B cell (primary cell): ENCODE measurements at regions of chr3 and their contacts with region 1.

Region 1: GRCh38 chr3:187319699-187320302 is 28.3 kb upstream of the MASP1 start:
- DNase-seq: peak; percentile 61
- ATAC-seq: peak; percentile 64
- H3K4me3 ChIP-seq: no peak overlapping the region
- H3K4me3 Mint-ChIP-seq: no peak overlapping the region
- H3K27ac ChIP-seq: no peak overlapping the region
- H3K27ac Mint-ChIP-seq: no peak overlapping the region
- H3K4me1 ChIP-seq: peaks cover 6% of the 10 kb centered on the region in 2 donors
- H3K4me1 Mint-ChIP-seq: peaks cover 8% of the 10 kb centered on the region
- H3K27me3 ChIP-seq: peaks cover 0 to 40% (median 21%) of the 10 kb centered on the region in 4 experiments
- H3K27me3 Mint-ChIP-seq: peaks cover 58% of the 10 kb centered on the region
- CTCF ChIP-seq: peak; percentile 73

Region 2: GRCh38 chr3:186772701-186773424 is 546.9 kb before region 1 on chr3:
- CTCF ChIA-PET with region 1: no interaction called
- POLR2A ChIA-PET with region 1: no interaction called
- intact Hi-C with region 1: no loop called
- DNase-seq: peak; percentile 87
- ATAC-seq: peak; percentile 93
- H3K4me3 ChIP-seq: peak overlapping the region; percentile 50 to 98 (median 79)
- H3K4me3 Mint-ChIP-seq: peak overlapping the region; percentile 93
- H3K27ac ChIP-seq: peak overlapping the region; percentile 69 to 87
- H3K27ac Mint-ChIP-seq: peak overlapping the region; percentile 91
- H3K4me1 ChIP-seq: peaks cover 11 to 12% of the 10 kb centered on the region in 2 donors
- H3K4me1 Mint-ChIP-seq: peaks cover 17% of the 10 kb centered on the region
- H3K27me3 ChIP-seq: no peaks in the 10 kb centered on the region
- H3K27me3 Mint-ChIP-seq: no peaks in the 10 kb centered on the region
- CTCF ChIP-seq: no peak

Region 3: GRCh38 chr3:187305881-187306280 is 13.9 kb before region 1 on chr3:
- CTCF ChIA-PET with region 1: interaction called, 40 read pairs
- POLR2A ChIA-PET with region 1: no interaction called
- intact Hi-C with region 1: no loop called
- DNase-seq: no peak
- ATAC-seq: no peak
- H3K4me3 ChIP-seq: no peak overlapping the region
- H3K4me3 Mint-ChIP-seq: no peak overlapping the region
- H3K27ac ChIP-seq: no peak overlapping the region
- H3K27ac Mint-ChIP-seq: no peak overlapping the region
- H3K4me1 ChIP-seq: no peaks in the 10 kb centered on the region
- H3K4me1 Mint-ChIP-seq: no peaks in the 10 kb centered on the region
- H3K27me3 ChIP-seq: peaks cover 0 to 7% (median 1%) of the 10 kb centered on the region in 4 experiments
- H3K27me3 Mint-ChIP-seq: peaks cover 35% of the 10 kb centered on the region
- CTCF ChIP-seq: no peak

Region 4: DNA sequence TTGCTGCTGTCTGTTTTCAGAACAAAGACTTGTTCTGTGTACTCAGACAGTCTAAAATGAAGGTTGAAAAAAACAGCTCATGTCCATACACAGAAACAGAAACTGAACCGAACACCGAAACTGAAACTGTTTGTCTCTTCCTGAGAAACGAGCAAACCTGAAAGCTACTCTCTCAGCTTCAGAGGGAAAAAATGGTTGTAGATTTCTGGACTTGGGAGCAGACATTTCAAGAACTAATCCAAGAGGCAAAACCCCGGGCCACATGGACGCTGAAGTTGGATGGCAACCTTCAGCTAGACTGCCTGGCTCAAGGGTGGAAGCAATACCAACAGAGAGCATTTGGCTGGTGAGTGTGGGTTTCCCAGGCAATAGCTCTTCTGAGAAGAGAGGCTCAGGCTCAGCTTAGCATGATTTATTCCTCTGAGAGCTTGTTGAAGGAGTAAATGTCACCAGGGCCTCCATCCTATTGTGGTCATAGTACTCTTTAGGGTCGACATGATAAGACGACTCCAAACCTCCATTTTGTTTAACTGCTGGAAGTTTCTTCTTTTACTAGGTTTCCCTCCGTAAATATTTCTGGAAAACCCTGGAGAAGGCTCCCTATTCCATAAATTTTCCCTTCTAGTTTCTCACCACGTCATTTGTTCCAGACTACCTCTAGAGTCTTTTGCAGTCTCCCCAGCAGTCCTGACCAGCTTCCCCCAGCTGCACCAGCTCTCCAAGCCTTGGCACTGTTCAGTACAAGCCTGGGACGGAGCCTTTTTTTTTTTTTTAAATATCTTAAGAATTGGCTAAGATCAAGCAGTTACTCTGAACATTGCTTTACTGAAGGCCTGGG is 48.7 kb after region 1 on chr3 and contains the start of gene RTP4:
- CTCF ChIA-PET with region 1: interaction called, 10 read pairs
- POLR2A ChIA-PET with region 1: no interaction called
- intact Hi-C with region 1: no loop called
- DNase-seq: peak; percentile 78
- ATAC-seq: peak; percentile 82
- H3K4me3 ChIP-seq: peak within 1 kb of the TSS; percentile 74 to 92 (median 81)
- H3K4me3 Mint-ChIP-seq: peak within 1 kb of the TSS; percentile 98
- H3K27ac ChIP-seq: peak within 1 kb of the TSS; percentile 71 to 89
- H3K27ac Mint-ChIP-seq: peak within 1 kb of the TSS; percentile 95
- H3K4me1 ChIP-seq: peaks cover 16 to 17% of the 10 kb centered on the region in 2 donors
- H3K4me1 Mint-ChIP-seq: peaks cover 21% of the 10 kb centered on the region
- H3K27me3 ChIP-seq: no peaks in the 10 kb centered on the region
- H3K27me3 Mint-ChIP-seq: no peaks in the 10 kb centered on the region
- CTCF ChIP-seq: no peak
- total RNA-seq, gene RTP4: 6.7 and 8.2 TPM in 2 replicates

Region 5: GRCh38 chr3:187628169-187628568 is 308.4 kb after region 1 on chr3:
- CTCF ChIA-PET with region 1: no interaction called
- POLR2A ChIA-PET with region 1: no interaction called
- intact Hi-C with region 1: no loop called
- DNase-seq: no peak
- ATAC-seq: no peak
- H3K4me3 ChIP-seq: no peak overlapping the region
- H3K4me3 Mint-ChIP-seq: no peak overlapping the region
- H3K27ac ChIP-seq: no peak overlapping the region
- H3K27ac Mint-ChIP-seq: no peak overlapping the region
- H3K4me1 ChIP-seq: no peaks in the 10 kb centered on the region
- H3K4me1 Mint-ChIP-seq: no peaks in the 10 kb centered on the region
- H3K27me3 ChIP-seq: peaks cover 0 to 6% (median 0%) of the 10 kb centered on the region in 4 experiments
- H3K27me3 Mint-ChIP-seq: peaks cover 32% of the 10 kb centered on the region
- CTCF ChIP-seq: no peak

Region 6: DNA sequence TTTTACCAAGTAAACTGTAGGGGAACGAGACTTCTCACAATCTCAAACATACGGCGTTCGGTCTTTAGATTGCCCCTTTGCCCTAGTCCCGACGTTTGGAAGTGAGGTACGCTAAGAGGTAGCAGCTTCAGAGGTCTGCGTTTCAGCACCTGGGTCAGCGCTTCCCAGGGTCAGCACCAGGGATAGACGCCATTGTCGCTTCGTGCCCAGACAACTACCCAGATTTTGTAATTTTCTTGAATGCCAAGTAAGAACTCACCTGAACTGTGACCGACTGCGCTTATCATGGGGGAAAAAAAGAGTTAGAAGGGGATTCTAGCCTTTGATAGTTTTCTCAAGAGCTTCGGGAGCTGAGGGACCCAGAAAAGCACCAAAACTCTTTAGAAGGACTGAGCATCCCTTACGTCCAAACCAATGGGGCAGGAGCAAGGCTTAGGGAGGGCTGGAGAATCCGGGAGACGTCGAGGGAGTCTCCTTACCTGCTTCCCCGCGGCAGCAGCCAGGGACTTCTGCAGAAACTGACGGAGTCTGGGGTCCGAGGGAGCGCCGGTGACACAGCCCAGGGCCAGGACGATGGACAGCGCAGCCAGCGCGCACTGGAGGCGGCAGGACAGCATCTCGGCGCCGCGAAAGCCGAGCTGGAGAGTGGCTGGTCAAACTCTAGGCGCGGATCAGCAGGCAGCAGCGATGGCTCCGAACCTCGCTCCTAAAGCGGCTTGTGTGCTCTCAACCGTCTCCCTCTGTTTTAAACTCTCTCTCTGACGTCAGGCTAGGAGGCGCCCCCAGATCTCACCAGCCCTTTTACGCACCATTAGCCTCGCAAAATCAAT is 350.1 kb after region 1 on chr3 and contains the start of gene SST:
- CTCF ChIA-PET with region 1: interaction called, 15 read pairs
- POLR2A ChIA-PET with region 1: no interaction called
- intact Hi-C with region 1: no loop called
- DNase-seq: no peak
- ATAC-seq: no peak
- H3K4me3 ChIP-seq: no peak within 1 kb of the TSS
- H3K4me3 Mint-ChIP-seq: no peak within 1 kb of the TSS
- H3K27ac ChIP-seq: no peak within 1 kb of the TSS
- H3K27ac Mint-ChIP-seq: no peak within 1 kb of the TSS
- H3K4me1 ChIP-seq: peaks cover 0 to 4% of the 10 kb centered on the region in 2 donors
- H3K4me1 Mint-ChIP-seq: peaks cover 5% of the 10 kb centered on the region
- H3K27me3 ChIP-seq: peaks cover 0 to 30% (median 22%) of the 10 kb centered on the region in 4 experiments
- H3K27me3 Mint-ChIP-seq: peaks cover 59% of the 10 kb centered on the region
- CTCF ChIP-seq: no peak
- total RNA-seq, gene SST: not detected in 2 replicates

Region 7: DNA sequence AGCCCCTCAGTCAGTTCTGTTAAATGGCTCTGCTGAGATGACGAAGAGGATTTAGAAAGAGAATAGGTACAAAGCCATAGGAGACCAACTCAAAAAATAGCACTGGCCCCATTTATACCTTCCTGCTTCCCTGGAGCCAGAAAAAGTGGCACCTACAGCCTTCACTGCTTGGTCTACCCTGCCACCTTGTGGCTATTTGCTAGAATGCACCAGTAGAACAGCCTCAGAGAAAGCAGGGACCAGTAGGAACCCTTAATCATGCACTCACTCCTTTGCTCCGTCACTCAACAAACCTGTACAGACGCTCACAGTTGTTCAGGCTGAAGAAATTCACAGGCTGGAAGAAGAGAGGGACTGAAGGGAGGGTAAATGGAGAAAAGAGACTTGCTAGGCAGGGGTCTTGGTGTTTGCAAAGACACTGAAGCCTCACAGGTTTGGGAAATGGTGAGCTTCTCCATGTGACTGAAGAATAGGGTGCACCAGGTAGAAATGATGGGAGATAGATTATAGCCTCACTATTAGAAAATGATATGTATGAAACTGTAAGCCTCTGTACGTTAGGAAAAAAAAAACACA is 394.7 kb after region 1 on chr3:
- CTCF ChIA-PET with region 1: interaction called, 184 read pairs
- POLR2A ChIA-PET with region 1: no interaction called
- intact Hi-C with region 1: no loop called
- DNase-seq: peak; percentile 74
- ATAC-seq: peak; percentile 86
- H3K4me3 ChIP-seq: no peak overlapping the region
- H3K4me3 Mint-ChIP-seq: no peak overlapping the region
- H3K27ac ChIP-seq: no peak overlapping the region
- H3K27ac Mint-ChIP-seq: no peak overlapping the region
- H3K4me1 ChIP-seq: no peaks in the 10 kb centered on the region
- H3K4me1 Mint-ChIP-seq: no peaks in the 10 kb centered on the region
- H3K27me3 ChIP-seq: no peaks in the 10 kb centered on the region
- H3K27me3 Mint-ChIP-seq: no peaks in the 10 kb centered on the region
- CTCF ChIP-seq: peak; percentile 97

Region 8: DNA sequence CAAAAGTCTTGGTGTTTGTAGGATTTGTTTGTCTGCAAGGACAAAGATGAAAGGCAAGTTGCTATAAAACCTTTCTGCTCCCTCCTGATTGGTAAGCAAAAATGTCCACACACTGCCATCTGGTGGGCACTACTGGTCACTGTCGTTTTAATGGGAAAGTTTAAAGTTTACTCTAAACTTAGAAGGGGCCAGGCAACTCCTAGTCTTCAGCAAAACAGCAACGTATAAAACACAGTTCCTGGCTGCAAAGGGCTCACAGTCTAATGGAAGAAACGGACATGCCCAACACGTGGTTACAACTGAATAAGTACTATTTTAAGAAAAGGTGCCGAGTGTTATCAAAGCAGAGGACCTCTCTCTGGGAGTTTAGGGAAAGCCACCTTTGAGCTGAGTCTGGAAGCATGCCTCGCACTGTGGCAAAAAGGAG is 1828.3 kb after region 1 on chr3:
- CTCF ChIA-PET with region 1: interaction called, 8 read pairs
- POLR2A ChIA-PET with region 1: no interaction called
- intact Hi-C with region 1: loop called (anchors 5 kb)
- DNase-seq: peak; percentile 71
- ATAC-seq: peak; percentile 58
- H3K4me3 ChIP-seq: no peak overlapping the region
- H3K4me3 Mint-ChIP-seq: no peak overlapping the region
- H3K27ac ChIP-seq: no peak overlapping the region
- H3K27ac Mint-ChIP-seq: no peak overlapping the region
- H3K4me1 ChIP-seq: no peaks in the 10 kb centered on the region
- H3K4me1 Mint-ChIP-seq: no peaks in the 10 kb centered on the region
- H3K27me3 ChIP-seq: no peaks in the 10 kb centered on the region
- H3K27me3 Mint-ChIP-seq: peaks cover 28% of the 10 kb centered on the region
- CTCF ChIP-seq: peak; percentile 84